ENCODE measurements at regions of chr4 and their contacts with region 1.

Region 1: DNA sequence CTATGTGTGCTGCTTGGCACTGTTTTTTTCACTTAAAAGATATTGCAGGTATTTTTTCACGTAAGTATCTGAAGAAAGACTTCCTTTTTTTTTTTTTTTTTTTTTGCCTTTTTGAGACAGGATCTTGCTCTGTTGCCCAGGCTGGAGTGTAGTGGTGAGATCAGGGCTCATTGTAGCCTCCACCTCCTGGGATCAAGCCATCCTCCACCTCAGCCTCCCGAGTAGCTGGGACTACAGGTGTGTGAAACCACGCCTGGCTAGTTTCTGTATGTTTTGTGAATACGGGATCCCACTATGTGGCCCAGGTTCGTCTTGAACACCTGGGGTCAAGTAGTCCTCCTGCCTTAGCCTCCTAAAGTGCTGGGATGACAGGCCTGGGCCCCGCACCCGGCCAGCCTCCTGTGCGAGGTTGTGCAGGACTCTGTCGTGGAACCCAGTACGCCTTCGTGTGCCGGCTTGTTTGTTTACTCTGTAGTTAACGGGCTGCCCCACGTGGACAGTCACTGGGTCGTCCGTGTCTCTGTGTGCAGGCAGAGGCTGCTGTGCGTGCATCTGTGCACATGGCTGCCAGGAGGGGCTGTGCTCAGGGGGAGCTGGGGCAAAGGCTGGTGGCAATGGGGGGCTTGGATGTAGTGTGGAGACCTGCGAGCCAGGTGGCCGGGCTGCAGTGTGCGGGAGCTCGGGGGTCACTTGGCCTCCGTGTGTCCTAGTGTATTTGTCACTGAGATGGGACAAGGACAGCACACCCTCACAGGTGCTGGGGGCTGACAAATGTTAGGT is 179.5 kb downstream of the ADRA2C start:
- DNase-seq: no peak
- ATAC-seq: no peak
- H3K4me3 Mint-ChIP-seq: no peak overlapping the region
- H3K27ac Mint-ChIP-seq: no peak overlapping the region
- H3K4me1 Mint-ChIP-seq: peaks cover 3% of the 10 kb centered on the region
- H3K27me3 Mint-ChIP-seq: peaks cover 3% of the 10 kb centered on the region

Region 2: DNA sequence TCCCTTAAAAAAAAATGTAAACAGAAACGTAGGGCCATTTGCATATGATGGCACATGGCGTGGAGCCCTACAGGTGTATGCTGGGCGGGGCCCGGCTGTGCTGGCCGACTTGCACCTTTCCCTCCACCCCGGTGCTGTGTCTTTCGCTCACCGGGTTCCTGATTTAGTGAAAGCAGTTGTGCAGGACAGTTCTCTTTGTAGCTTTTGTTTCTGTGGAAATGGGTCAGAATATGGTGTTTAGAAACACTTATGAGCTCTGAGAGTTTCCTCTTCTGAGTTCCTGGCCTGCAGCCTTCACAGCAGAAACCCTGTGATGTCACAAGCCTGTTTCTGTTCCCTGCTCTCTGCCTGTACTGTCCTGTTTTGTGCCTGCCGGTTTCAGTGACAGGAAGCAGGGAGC is 719.2 kb before region 1 on chr4:
- CTCF ChIA-PET with region 1: no interaction called
- POLR2A ChIA-PET with region 1: no interaction called
- intact Hi-C with region 1: no loop called
- DNase-seq: no peak
- ATAC-seq: no peak
- H3K4me3 Mint-ChIP-seq: no peak overlapping the region
- H3K27ac Mint-ChIP-seq: no peak overlapping the region
- H3K4me1 Mint-ChIP-seq: peaks cover under 1% of the 10 kb centered on the region
- H3K27me3 Mint-ChIP-seq: no peaks in the 10 kb centered on the region

Region 3: GRCh38 chr4:3898098-3898497 is 47.6 kb before region 1 on chr4:
- CTCF ChIA-PET with region 1: no interaction called
- POLR2A ChIA-PET with region 1: no interaction called
- intact Hi-C with region 1: loop called in 1 of 2 experiments (anchors 2 kb)
- DNase-seq: no peak
- ATAC-seq: no peak
- H3K4me3 Mint-ChIP-seq: no peak overlapping the region
- H3K27ac Mint-ChIP-seq: no peak overlapping the region
- H3K4me1 Mint-ChIP-seq: no peaks in the 10 kb centered on the region
- H3K27me3 Mint-ChIP-seq: peaks cover 12% of the 10 kb centered on the region

Region 4: GRCh38 chr4:3911252-3911856 is 34.3 kb before region 1 on chr4:
- CTCF ChIA-PET with region 1: no interaction called
- POLR2A ChIA-PET with region 1: no interaction called
- intact Hi-C with region 1: no loop called
- DNase-seq: no peak
- ATAC-seq: no peak
- H3K4me3 Mint-ChIP-seq: no peak overlapping the region
- H3K27ac Mint-ChIP-seq: no peak overlapping the region
- H3K4me1 Mint-ChIP-seq: no peaks in the 10 kb centered on the region
- H3K27me3 Mint-ChIP-seq: peaks cover 3% of the 10 kb centered on the region

Region 5: DNA sequence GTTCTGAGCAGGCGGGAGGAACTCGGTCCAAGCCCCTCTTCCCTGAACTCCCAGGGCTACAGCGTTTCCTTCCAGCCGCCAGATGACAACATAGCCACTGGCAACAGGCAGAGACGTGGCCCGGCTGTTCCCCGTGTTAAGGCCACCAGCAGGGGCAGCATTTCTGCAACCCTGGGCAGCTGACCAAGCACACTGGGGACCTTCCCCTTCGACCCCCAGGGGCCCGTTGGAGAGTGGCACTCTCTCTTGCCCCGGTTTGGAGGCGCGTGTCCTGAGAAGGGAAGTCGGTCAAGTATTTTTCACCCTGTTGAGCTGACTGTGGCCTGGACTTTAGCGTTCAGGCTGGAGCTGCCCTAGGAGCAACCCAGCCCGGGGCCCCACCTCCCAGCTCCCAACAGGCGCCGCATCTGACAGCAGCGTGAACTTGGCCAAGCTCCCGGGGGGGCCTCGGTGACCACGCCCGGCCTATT is 382.0 kb after region 1 on chr4:
- CTCF ChIA-PET with region 1: no interaction called
- POLR2A ChIA-PET with region 1: no interaction called
- intact Hi-C with region 1: no loop called
- DNase-seq: peak; percentile 11
- ATAC-seq: no peak
- H3K4me3 Mint-ChIP-seq: no peak overlapping the region
- H3K27ac Mint-ChIP-seq: no peak overlapping the region
- H3K4me1 Mint-ChIP-seq: no peaks in the 10 kb centered on the region
- H3K27me3 Mint-ChIP-seq: no peaks in the 10 kb centered on the region

Measured in activated CD4-positive, alpha-beta T cell treated with anti-CD3 and anti-CD28 coated beads for 36 hours (primary cell).